Activated T-helper 1 cell treated with anti-CD3 and anti-CD28 coated beads, Interleukin-12 subunit alpha, Interleukin-12 subunit beta, Interleukin-2, Interleukin-4 antibody, amounts not matched to agents 30 ng/mL and 10 ng/mL and 1 ng/mL, durations not matched to agents 14 hours and 24 hours and 36 hours (primary cell): ENCODE measurements at regions of chrX and their contacts with region 1.

Region 1: GRCh38 chrX:44872817-44873414 is at the start of gene KDM6A:
- DNase-seq: peak; percentile 91
- H3K4me3 Mint-ChIP-seq: peak within 1 kb of the TSS; percentile 97
- H3K27ac Mint-ChIP-seq: peak within 1 kb of the TSS; percentile 98
- H3K4me1 Mint-ChIP-seq: peaks cover 6% of the 10 kb centered on the region
- H3K27me3 Mint-ChIP-seq: no peaks in the 10 kb centered on the region
- total RNA-seq, gene KDM6A: 26.4 and 28.1 TPM in 2 replicates

Region 2: DNA sequence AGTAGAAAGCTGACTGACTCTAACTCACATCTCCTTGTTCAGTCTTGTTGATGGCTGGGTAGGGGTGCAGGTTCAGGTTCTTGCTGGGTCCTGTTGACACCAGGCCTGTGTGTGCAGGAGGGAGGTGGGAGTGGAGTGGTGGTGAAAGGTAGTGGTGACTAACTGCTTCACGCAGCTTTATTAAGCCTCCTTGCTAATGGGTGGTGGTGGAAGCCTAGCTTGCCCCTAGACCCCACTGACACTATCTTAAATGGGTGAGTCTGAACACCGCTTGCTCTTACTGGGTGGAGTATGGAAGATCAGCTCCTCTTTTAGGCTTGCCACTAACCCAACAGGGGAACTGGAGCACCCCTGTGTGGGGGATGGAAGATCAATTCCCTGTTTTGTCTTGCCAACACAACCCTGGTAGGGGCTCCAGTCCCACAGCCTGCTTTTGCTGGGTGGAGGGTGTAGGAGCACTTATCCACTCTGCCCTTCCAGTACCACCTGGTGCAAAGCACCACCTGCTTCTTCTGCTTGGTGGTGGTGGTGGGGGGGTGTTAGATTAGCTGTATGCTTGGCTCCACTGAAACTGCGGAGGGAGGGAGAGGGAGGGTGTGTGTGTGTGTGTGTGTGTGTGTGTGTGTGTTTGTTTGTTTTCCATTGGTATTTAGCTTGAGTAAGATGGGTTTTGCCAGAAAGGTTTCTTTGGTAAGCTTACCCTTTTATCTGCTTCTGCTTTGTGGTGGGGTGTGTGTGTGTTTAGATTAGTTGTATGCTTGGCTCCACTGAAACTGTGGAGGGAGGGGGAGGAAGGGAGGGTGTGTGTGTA is 25.7 kb after region 1 on chrX:
- intact Hi-C with region 1: loop called (anchors 1 kb)
- DNase-seq: no peak
- H3K4me3 Mint-ChIP-seq: no peak overlapping the region
- H3K27ac Mint-ChIP-seq: peak overlapping the region; percentile 87
- H3K4me1 Mint-ChIP-seq: peaks cover 35% of the 10 kb centered on the region
- H3K27me3 Mint-ChIP-seq: no peaks in the 10 kb centered on the region

Region 3: GRCh38 chrX:44908827-44909226 is 35.9 kb after region 1 on chrX:
- intact Hi-C with region 1: no loop called
- DNase-seq: no peak
- H3K4me3 Mint-ChIP-seq: no peak overlapping the region
- H3K27ac Mint-ChIP-seq: no peak overlapping the region
- H3K4me1 Mint-ChIP-seq: peaks cover 29% of the 10 kb centered on the region
- H3K27me3 Mint-ChIP-seq: no peaks in the 10 kb centered on the region

Region 4: GRCh38 chrX:44974422-44974821 is 101.5 kb after region 1 on chrX:
- intact Hi-C with region 1: no loop called
- DNase-seq: no peak
- H3K4me3 Mint-ChIP-seq: no peak overlapping the region
- H3K27ac Mint-ChIP-seq: no peak overlapping the region
- H3K4me1 Mint-ChIP-seq: peaks cover 11% of the 10 kb centered on the region
- H3K27me3 Mint-ChIP-seq: no peaks in the 10 kb centered on the region

Region 5: GRCh38 chrX:44997888-44998287 is 125.0 kb after region 1 on chrX:
- intact Hi-C with region 1: loop called (anchors 5 kb)
- DNase-seq: no peak
- H3K4me3 Mint-ChIP-seq: peak overlapping the region; percentile 57
- H3K27ac Mint-ChIP-seq: peak overlapping the region; percentile 86
- H3K4me1 Mint-ChIP-seq: peaks cover 42% of the 10 kb centered on the region
- H3K27me3 Mint-ChIP-seq: no peaks in the 10 kb centered on the region

Region 6: GRCh38 chrX:45186643-45187026 is 313.7 kb after region 1 on chrX:
- intact Hi-C with region 1: loop called (anchors 5 kb)
- DNase-seq: no peak
- H3K4me3 Mint-ChIP-seq: peak overlapping the region; percentile 87
- H3K27ac Mint-ChIP-seq: peak overlapping the region; percentile 78
- H3K4me1 Mint-ChIP-seq: peaks cover 26% of the 10 kb centered on the region
- H3K27me3 Mint-ChIP-seq: no peaks in the 10 kb centered on the region

Region 7: DNA sequence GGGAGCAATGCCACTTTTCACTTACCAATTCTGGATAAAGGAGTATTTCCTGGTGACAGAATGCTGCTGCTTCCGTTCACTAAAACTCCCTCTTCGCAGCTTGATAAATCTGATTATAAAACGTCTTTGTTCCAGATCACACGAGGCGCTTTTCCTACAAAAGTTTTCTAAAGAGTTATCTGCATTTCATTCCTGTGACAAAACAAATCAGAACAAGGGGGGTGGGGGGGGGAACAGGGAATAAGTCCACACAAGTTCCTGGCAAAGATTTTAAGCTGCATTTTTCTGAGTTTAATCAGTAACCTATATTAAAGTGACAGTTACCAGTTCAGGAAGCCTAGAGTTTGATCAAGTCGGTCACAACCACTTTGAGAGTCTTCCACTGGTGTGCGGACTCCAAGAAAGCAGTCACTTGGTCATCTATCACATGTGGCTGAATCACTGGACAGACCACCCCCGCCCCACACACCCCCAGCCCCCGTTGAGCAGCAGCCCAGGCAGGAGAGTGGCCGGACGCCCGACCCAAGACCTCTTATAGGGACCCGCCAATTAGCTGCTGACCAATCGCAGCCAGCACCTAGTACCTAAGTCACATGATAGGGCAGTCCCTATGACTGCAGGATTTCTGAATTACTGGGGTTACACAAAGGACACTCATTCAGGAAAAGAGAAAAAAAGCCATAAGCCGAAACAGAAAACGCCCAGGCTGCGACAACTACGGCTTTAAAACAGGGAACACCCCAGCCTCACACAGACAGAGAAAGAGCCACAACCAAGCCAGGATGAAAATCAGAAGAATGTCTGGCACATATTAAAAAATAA is 897.1 kb after region 1 on chrX:
- intact Hi-C with region 1: loop called (anchors 2 kb)
- DNase-seq: peak; percentile 6
- H3K4me3 Mint-ChIP-seq: peak overlapping the region; percentile 98
- H3K27ac Mint-ChIP-seq: peak overlapping the region; percentile 98
- H3K4me1 Mint-ChIP-seq: peaks cover 59% of the 10 kb centered on the region
- H3K27me3 Mint-ChIP-seq: no peaks in the 10 kb centered on the region